GM10248 (cell line): ENCODE measurements at regions of chr1 and their contacts with region 1.

Region 1: DNA sequence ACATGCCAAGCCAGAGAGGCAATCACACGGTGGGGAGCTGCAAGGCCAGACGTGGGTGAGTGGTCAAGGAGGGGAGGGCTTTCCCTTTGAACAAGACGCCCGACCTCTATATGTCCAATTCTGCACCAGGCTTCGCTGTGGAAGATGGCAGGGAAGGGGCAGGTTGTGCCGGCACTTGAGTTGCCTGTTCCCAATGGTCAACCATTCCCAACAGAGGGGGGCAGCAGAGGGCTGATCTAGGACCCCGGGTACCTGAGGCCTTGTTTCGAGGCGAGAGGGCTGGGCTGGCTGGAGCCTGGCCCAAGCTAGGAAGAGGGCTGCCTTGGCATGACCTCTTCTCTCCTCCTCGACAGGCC is 64.9 kb downstream of the TMEM53 start:
- DNase-seq: peak; percentile 67
- CTCF ChIP-seq: peak; percentile 42

Region 2: DNA sequence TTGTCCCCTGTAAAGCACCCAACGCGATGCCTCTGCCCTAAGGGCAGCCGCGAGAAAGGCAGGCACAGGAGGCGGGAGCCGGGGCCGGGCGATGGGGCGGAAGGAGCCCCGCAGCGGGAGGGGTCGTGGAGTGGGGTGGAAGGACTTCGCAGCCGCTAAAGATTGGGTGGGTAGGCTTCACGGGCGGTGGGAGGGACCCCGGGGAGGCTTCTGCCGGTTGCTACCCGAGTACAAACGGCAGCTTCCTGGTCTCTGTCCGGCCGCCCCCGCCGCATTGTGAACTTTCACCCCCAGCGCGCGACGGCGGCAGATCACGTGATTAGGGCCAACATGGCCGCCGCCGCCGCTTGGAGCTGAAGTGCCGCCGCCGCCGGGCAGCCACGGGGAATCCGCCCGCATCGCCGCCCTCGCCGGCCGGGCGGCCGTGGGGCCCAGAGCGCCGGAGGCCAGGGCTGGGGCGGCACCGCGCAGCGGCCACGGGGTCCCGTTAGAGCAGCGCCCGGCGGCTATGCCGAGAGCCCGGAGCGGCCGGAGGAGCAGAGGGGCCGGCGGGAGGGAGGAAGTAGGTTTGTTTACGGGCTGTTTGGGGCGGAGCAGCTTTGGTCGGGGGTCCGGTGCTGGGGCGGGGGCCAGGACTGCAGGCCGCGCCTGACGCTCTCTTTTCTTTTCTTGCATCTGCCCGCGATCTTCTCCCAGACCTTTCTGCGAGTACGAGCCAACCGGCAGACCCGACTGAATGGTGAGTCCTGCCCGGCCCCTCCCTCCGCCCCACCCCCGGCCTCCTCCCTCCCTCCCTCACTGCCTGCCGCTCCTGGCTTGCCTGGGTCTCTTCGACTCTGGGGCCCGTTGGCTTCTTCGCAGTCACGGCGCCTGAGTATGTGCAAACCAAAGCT is 22.5 kb after region 1 on chr1:
- CTCF ChIA-PET with region 1: interaction called, 34 read pairs
- POLR2A ChIA-PET with region 1: no interaction called
- DNase-seq: peak; percentile 96
- CTCF ChIP-seq: no peak